ENCODE measurements at regions of chr10 and their contacts with region 1.

Region 1: GRCh38 chr10:13924040-13924725 is 337.4 kb downstream of the PRPF18 start:
- DNase-seq: peak; percentile 74
- H3K4me3 ChIP-seq: no peak overlapping the region
- H3K27ac ChIP-seq: peak overlapping the region; percentile 87
- H3K4me1 ChIP-seq: peaks cover 24% of the 10 kb centered on the region
- H3K27me3 ChIP-seq: no peaks in the 10 kb centered on the region
- CTCF ChIP-seq: no peak
- POLR2A ChIP-seq: peak; percentile 45

Region 2: GRCh38 chr10:13939391-13939790 is 15.2 kb after region 1 on chr10:
- CTCF ChIA-PET with region 1: no interaction called
- POLR2A ChIA-PET with region 1: no interaction called
- dilution Hi-C with region 1: no loop called
- intact Hi-C with region 1: loop called (anchors 1 kb)
- DNase-seq: peak; percentile 89
- H3K4me3 ChIP-seq: no peak overlapping the region
- H3K27ac ChIP-seq: no peak overlapping the region
- H3K4me1 ChIP-seq: peaks cover 17% of the 10 kb centered on the region
- H3K27me3 ChIP-seq: no peaks in the 10 kb centered on the region
- CTCF ChIP-seq: no peak
- POLR2A ChIP-seq: no peak

Region 3: GRCh38 chr10:13949844-13950595 is 25.8 kb after region 1 on chr10:
- CTCF ChIA-PET with region 1: no interaction called
- POLR2A ChIA-PET with region 1: no interaction called
- dilution Hi-C with region 1: no loop called
- intact Hi-C with region 1: loop called (anchors 2 kb)
- DNase-seq: peak; percentile 22
- H3K4me3 ChIP-seq: no peak overlapping the region
- H3K27ac ChIP-seq: no peak overlapping the region
- H3K4me1 ChIP-seq: peaks cover 33% of the 10 kb centered on the region
- H3K27me3 ChIP-seq: no peaks in the 10 kb centered on the region
- CTCF ChIP-seq: no peak
- POLR2A ChIP-seq: no peak

Region 4: GRCh38 chr10:13961097-13961496 is 36.9 kb after region 1 on chr10:
- CTCF ChIA-PET with region 1: no interaction called
- POLR2A ChIA-PET with region 1: no interaction called
- dilution Hi-C with region 1: no loop called
- intact Hi-C with region 1: no loop called
- DNase-seq: peak; percentile 47
- H3K4me3 ChIP-seq: no peak overlapping the region
- H3K27ac ChIP-seq: no peak overlapping the region
- H3K4me1 ChIP-seq: peaks cover 20% of the 10 kb centered on the region
- H3K27me3 ChIP-seq: no peaks in the 10 kb centered on the region
- CTCF ChIP-seq: no peak
- POLR2A ChIP-seq: no peak